ENCODE measurements at regions of chr1 and their contacts with region 1.

Region 1: GRCh38 chr1:169829671-169830070 is 35.0 kb upstream of the METTL18 start:
- DNase-seq: no peak
- ATAC-seq: no peak
- H3K4me3 ChIP-seq: no peak overlapping the region
- H3K27ac ChIP-seq: no peak overlapping the region
- H3K4me1 ChIP-seq: no peaks in the 10 kb centered on the region
- H3K27me3 ChIP-seq: no peaks in the 10 kb centered on the region
- CTCF ChIP-seq: no peak
- POLR2A ChIP-seq: no peak
- RAD21 ChIP-seq: no peak

Region 2: DNA sequence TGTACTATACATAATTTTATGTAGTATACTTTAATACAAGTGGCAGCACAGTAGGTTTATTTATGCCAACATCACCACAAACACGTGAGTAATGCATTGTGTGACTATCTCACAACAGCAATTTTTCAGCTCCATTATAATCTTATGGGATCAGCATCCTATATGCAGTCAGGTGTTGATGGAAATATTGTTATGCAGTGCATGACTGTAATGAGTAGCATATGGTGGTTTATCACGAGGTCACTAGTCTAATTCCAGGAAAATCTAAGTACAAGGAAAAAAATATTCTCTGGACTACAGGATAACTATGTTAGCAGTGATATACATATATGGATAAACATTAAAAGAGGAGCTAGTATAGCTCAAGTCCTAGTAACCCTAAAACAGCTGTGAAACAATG is 654.2 kb before region 1 on chr1:
- CTCF ChIA-PET with region 1: no interaction called
- POLR2A ChIA-PET with region 1: no interaction called
- RAD21 ChIA-PET with region 1: no interaction called
- intact Hi-C with region 1: loop called (anchors 5 kb)
- DNase-seq: no peak
- ATAC-seq: no peak
- H3K4me3 ChIP-seq: no peak overlapping the region
- H3K27ac ChIP-seq: no peak overlapping the region
- H3K4me1 ChIP-seq: no peaks in the 10 kb centered on the region
- H3K27me3 ChIP-seq: no peaks in the 10 kb centered on the region
- CTCF ChIP-seq: no peak
- POLR2A ChIP-seq: no peak
- RAD21 ChIP-seq: no peak

Region 3: DNA sequence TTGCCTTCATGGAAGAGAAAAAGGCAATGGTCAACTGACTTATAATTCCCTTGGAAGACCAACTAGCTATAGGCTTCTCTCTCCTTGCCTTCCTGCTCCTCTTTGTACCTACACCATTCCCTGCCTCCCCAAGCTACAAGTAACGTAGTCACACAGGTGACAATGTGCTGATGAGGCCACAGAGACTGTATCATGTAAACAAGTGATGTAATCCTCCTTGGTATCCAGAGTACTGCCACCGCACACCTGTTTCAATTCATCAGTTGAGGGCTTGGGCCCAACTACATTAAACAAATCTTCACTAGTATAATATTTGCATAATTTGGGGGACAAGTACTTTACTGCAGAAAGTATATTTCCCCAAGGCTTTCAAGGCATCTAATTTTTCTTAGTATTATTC is 140.4 kb after region 1 on chr1:
- CTCF ChIA-PET with region 1: no interaction called
- POLR2A ChIA-PET with region 1: no interaction called
- RAD21 ChIA-PET with region 1: no interaction called
- intact Hi-C with region 1: no loop called
- DNase-seq: no peak
- ATAC-seq: no peak
- H3K4me3 ChIP-seq: no peak overlapping the region
- H3K27ac ChIP-seq: no peak overlapping the region
- H3K4me1 ChIP-seq: no peaks in the 10 kb centered on the region
- H3K27me3 ChIP-seq: no peaks in the 10 kb centered on the region
- CTCF ChIP-seq: no peak
- POLR2A ChIP-seq: no peak
- RAD21 ChIP-seq: no peak

Measured in HCT116 (cell line).